ENCODE measurements at regions of chr1 and their contacts with region 1.

Region 1: DNA sequence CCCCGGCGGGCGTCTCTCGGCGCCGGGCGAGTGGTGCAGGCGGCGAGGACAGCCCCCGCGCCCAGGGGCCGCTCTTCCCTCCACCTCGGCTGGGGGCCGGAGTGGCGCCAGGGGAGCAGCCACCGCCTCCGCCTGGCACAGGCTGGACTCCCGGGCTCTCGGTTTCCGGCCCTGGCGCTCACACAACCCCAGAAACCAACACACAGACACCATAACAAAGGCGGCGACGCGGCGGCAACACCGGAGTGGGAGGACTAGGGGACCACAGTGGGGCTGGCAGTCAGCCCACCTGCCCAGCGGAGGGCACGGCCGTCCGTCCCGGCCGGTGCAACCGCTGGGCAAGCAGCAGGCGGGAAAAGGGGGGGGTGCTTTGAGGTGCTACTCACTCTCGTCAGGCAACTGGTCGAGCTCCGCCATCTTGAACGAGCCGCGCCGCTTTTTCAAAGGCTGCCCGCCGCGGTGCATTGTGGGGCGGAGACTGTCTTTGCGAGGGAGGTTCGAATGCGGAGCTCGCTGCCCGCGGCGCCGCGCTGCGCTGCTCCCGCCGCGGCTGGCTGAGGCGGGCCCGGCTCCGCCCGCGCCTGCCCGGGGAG is at the start of gene LIN9:
- DNase-seq: peak; percentile 87
- ATAC-seq: peak; percentile 95
- H3K4me3 ChIP-seq: peak within 1 kb of the TSS; percentile 93
- H3K27ac ChIP-seq: peak within 1 kb of the TSS; percentile 74
- H3K4me1 ChIP-seq: peaks cover 4% of the 10 kb centered on the region
- H3K27me3 ChIP-seq: no peaks in the 10 kb centered on the region
- CTCF ChIP-seq: no peak
- POLR2A ChIP-seq: peak; percentile 61; the same call in 1 of the 2 replicates
- RAD21 ChIP-seq: no peak
- total RNA-seq, gene LIN9: 3.9 and 5.8 TPM in 2 replicates

Region 2: DNA sequence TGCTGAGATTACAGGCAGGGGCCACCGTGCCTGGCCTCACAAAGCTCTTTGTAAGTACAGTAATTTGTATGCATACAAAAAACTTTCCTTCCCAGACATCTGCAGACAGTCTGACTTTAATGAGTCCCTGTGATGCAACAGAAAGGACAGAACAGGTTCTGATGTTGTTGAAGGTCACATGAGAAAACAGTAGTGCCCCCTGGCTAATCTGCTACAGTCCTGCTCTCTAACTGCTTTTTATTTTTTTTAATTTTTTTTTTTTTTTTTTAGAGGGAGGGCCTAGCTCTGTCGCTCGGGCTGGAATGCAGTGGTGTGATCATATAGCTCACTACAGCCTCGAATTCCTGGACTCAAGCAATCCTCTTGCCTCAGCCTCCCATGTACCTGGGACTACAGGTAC is 159.0 kb before region 1 on chr1:
- CTCF ChIA-PET with region 1: no interaction called
- POLR2A ChIA-PET with region 1: no interaction called
- dilution Hi-C with region 1: no loop called
- in situ Hi-C with region 1: no loop called
- intact Hi-C with region 1: no loop called
- DNase-seq: peak; percentile 29
- ATAC-seq: no peak
- H3K4me3 ChIP-seq: no peak overlapping the region
- H3K27ac ChIP-seq: no peak overlapping the region
- H3K4me1 ChIP-seq: no peaks in the 10 kb centered on the region
- H3K27me3 ChIP-seq: no peaks in the 10 kb centered on the region
- CTCF ChIP-seq: no peak
- POLR2A ChIP-seq: no peak
- RAD21 ChIP-seq: no peak

Region 3: GRCh38 chr1:226186124-226187018 is 122.4 kb before region 1 on chr1 and contains the start of gene ACBD3:
- CTCF ChIA-PET with region 1: no interaction called
- POLR2A ChIA-PET with region 1: no interaction called
- dilution Hi-C with region 1: no loop called
- in situ Hi-C with region 1: no loop called
- intact Hi-C with region 1: loop called (anchors 1 kb)
- DNase-seq: peak; percentile 86
- ATAC-seq: peak; percentile 97
- H3K4me3 ChIP-seq: peak within 1 kb of the TSS; percentile 99
- H3K27ac ChIP-seq: peak within 1 kb of the TSS; percentile 97
- H3K4me1 ChIP-seq: peaks cover 6% of the 10 kb centered on the region; the same call in 1 of the 2 replicates
- H3K27me3 ChIP-seq: no peaks in the 10 kb centered on the region
- CTCF ChIP-seq: no peak
- POLR2A ChIP-seq: peak; percentile 95
- RAD21 ChIP-seq: no peak
- total RNA-seq, gene ACBD3: 59.7 and 95.3 TPM in 2 replicates

Region 4: GRCh38 chr1:226223786-226224244 is 85.0 kb before region 1 on chr1:
- CTCF ChIA-PET with region 1: no interaction called
- POLR2A ChIA-PET with region 1: no interaction called
- dilution Hi-C with region 1: no loop called
- in situ Hi-C with region 1: no loop called
- intact Hi-C with region 1: no loop called
- DNase-seq: no peak
- ATAC-seq: peak; percentile 67
- H3K4me3 ChIP-seq: peak overlapping the region; percentile 37
- H3K27ac ChIP-seq: no peak overlapping the region
- H3K4me1 ChIP-seq: 0 out of 2 replicates have a peak, but pooled peaks cover 1% of the 10 kb centered on the region
- H3K27me3 ChIP-seq: peaks cover 19% of the 10 kb centered on the region
- CTCF ChIP-seq: no peak
- POLR2A ChIP-seq: no peak
- RAD21 ChIP-seq: no peak

Region 5: DNA sequence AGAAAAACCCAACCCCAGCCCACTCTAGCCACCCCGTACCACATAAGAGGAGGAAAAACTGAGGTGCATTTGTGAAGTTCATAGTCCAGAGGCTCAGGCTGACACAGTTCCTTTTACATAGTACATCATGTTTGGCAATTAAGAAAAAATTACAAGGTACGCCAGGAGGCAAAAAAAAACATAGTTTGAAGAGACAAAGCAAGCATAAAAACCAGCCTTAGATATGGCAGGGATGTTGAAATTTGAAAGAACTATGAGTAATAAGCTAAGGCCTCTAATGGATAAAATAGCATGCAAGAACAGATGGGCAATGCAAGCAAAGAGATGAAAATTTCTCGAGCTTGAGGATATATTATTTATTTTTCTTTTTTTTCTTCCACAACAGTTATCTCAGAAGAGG is 53.4 kb before region 1 on chr1:
- CTCF ChIA-PET with region 1: no interaction called
- POLR2A ChIA-PET with region 1: no interaction called
- dilution Hi-C with region 1: no loop called
- in situ Hi-C with region 1: no loop called
- intact Hi-C with region 1: no loop called
- DNase-seq: peak; percentile 23
- ATAC-seq: peak; percentile 60
- H3K4me3 ChIP-seq: no peak overlapping the region
- H3K27ac ChIP-seq: no peak overlapping the region
- H3K4me1 ChIP-seq: no peaks in the 10 kb centered on the region; the same call in 1 of the 2 replicates
- H3K27me3 ChIP-seq: no peaks in the 10 kb centered on the region
- CTCF ChIP-seq: no peak
- POLR2A ChIP-seq: no peak
- RAD21 ChIP-seq: no peak

Region 6: DNA sequence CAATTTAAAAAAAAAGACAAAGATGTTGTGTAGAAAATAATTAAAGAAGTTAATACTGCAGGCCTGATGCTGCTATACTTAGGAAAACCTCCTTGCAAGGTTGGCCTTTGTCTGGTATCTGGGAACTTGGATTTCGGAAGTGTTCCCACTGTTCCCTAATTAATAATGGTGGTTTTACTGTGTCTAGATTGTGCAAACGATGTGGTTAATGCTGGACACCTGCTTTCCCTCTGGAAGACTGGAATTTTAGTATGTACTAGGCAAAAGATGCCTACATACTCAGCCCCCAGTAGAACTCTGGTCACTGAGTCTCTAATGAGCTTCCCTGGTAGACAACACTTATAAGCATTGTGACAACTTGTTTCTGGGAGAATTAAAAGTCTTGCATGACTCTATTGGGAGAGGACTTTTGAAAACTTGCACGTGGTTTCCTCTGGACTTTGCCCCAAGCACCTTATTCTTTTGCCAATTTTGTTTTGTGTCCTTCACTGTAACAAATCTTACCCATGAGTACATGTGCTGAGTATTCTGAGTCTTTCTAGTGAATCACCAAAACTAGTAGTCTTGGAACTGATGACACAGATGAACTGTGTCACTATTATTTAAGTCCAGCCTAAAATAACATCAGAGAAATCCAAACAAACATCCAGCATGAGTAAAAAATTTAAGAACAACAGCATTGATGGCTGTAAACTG is 40.2 kb before region 1 on chr1:
- CTCF ChIA-PET with region 1: interaction called, 3 read pairs
- POLR2A ChIA-PET with region 1: no interaction called
- dilution Hi-C with region 1: no loop called
- in situ Hi-C with region 1: no loop called
- intact Hi-C with region 1: loop called (anchors 5 kb)
- DNase-seq: peak; percentile 75
- ATAC-seq: peak; percentile 93
- H3K4me3 ChIP-seq: no peak overlapping the region
- H3K27ac ChIP-seq: no peak overlapping the region
- H3K4me1 ChIP-seq: peaks cover 5% of the 10 kb centered on the region; the same call in 1 of the 2 replicates
- H3K27me3 ChIP-seq: no peaks in the 10 kb centered on the region
- CTCF ChIP-seq: no peak
- POLR2A ChIP-seq: no peak
- RAD21 ChIP-seq: no peak

Region 7: DNA sequence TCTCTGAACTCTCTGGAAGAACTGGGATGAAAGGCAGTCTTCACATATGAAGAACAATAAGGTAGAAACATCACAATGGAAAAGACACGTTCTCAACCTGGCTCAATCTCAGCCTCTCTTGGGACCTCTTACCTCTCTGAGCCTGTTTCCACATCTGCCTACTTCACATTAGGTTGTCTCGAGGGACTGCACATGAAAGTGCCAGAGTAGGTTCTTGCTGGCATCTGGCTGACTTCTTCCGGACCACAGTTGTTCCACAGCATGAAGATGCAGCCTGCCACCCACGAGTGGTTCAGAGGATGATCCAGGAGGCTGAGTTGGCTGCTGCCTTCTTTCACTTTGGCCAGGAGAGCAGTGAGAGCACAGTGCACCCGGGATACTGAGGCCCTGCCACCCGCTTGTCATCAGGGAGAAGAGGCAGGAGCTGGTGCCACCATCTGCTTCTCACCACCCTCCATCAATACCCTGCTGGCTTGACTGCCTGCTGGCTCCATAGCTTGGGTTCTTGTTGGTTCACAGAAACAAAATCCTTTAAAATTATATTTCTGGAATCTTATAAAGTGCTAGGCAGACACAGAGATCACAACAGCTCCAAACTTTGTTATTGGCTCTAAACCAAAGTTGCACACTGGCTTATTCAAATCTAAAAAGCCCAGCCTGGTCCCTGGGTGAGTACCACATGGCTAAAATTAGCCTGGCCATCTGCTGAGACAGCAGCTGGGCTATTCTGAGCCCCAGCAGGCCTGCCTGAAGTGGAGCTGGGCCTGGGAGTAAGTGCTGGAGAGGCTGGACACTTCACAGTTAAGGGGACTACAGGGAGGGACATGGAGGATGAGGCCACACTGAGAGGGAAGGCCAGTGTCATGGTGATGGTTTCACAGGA is 47.1 kb after region 1 on chr1:
- CTCF ChIA-PET with region 1: no interaction called
- POLR2A ChIA-PET with region 1: no interaction called
- dilution Hi-C with region 1: no loop called
- in situ Hi-C with region 1: no loop called
- intact Hi-C with region 1: no loop called
- DNase-seq: no peak
- ATAC-seq: peak; percentile 62
- H3K4me3 ChIP-seq: no peak overlapping the region
- H3K27ac ChIP-seq: no peak overlapping the region
- H3K4me1 ChIP-seq: no peaks in the 10 kb centered on the region
- H3K27me3 ChIP-seq: no peaks in the 10 kb centered on the region
- CTCF ChIP-seq: no peak
- POLR2A ChIP-seq: no peak
- RAD21 ChIP-seq: no peak